ENCODE measurements at regions of chr18 and their contacts with region 1.

Region 1: GRCh38 chr18:63848159-63848558 is 39.3 kb upstream of the SERPINB2 start:
- DNase-seq: peak; percentile 88
- H3K4me3 ChIP-seq: no peak overlapping the region
- H3K27ac ChIP-seq: peak overlapping the region; percentile 18
- H3K4me1 ChIP-seq: peaks cover 45% of the 10 kb centered on the region
- H3K27me3 ChIP-seq: no peaks in the 10 kb centered on the region
- CTCF ChIP-seq: peak; percentile 76

Region 2: GRCh38 chr18:63119647-63120046 is 728.5 kb before region 1 on chr18:
- CTCF ChIA-PET with region 1: no interaction called
- POLR2A ChIA-PET with region 1: no interaction called
- intact Hi-C with region 1: loop called (anchors 10 kb)
- DNase-seq: peak; percentile 89
- H3K4me3 ChIP-seq: no peak overlapping the region
- H3K27ac ChIP-seq: peak overlapping the region; percentile 81
- H3K4me1 ChIP-seq: peaks cover 25% of the 10 kb centered on the region
- H3K27me3 ChIP-seq: no peaks in the 10 kb centered on the region
- CTCF ChIP-seq: peak; percentile 79

Region 3: GRCh38 chr18:63518178-63519012 is 329.8 kb before region 1 on chr18:
- CTCF ChIA-PET with region 1: interaction called, 5 read pairs
- POLR2A ChIA-PET with region 1: no interaction called
- intact Hi-C with region 1: loop called (anchors 1 kb)
- DNase-seq: peak; percentile 90
- H3K4me3 ChIP-seq: no peak overlapping the region
- H3K27ac ChIP-seq: no peak overlapping the region
- H3K4me1 ChIP-seq: no peaks in the 10 kb centered on the region
- H3K27me3 ChIP-seq: no peaks in the 10 kb centered on the region
- CTCF ChIP-seq: peak; percentile 77

Region 4: DNA sequence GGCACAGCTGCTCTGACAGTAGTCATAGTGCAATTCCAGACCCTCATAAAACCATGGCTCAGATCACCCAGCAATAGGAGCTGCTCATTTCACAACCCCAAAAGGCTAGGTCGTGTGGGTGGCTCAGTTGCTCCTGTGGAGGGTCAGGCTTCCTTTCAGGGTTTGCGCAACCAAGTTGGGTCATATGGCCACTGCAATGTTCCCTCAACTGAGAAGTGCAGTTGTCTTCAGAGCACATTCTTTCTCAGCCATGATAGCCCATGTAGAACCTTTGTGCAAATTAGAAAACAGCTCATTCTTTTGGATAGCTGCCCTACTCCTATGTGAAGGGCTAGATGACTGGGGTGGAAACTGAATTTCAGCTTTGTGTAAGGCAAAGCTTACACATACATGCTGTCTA is 257.8 kb before region 1 on chr18:
- CTCF ChIA-PET with region 1: no interaction called
- POLR2A ChIA-PET with region 1: no interaction called
- intact Hi-C with region 1: loop called (anchors 5 kb)
- DNase-seq: peak; percentile 58
- H3K4me3 ChIP-seq: no peak overlapping the region
- H3K27ac ChIP-seq: peak overlapping the region; percentile 75
- H3K4me1 ChIP-seq: peaks cover 37% of the 10 kb centered on the region
- H3K27me3 ChIP-seq: no peaks in the 10 kb centered on the region
- CTCF ChIP-seq: no peak

Region 5: GRCh38 chr18:63741769-63742168 is 106.4 kb before region 1 on chr18:
- CTCF ChIA-PET with region 1: no interaction called
- POLR2A ChIA-PET with region 1: no interaction called
- intact Hi-C with region 1: loop called (anchors 2 kb)
- DNase-seq: peak; percentile 71
- H3K4me3 ChIP-seq: no peak overlapping the region
- H3K27ac ChIP-seq: no peak overlapping the region
- H3K4me1 ChIP-seq: no peaks in the 10 kb centered on the region
- H3K27me3 ChIP-seq: no peaks in the 10 kb centered on the region
- CTCF ChIP-seq: peak; percentile 77

Measured in A673 (cell line).